HCT116 (cell line): ENCODE measurements at regions of chrX and their contacts with region 1.

Region 1: DNA sequence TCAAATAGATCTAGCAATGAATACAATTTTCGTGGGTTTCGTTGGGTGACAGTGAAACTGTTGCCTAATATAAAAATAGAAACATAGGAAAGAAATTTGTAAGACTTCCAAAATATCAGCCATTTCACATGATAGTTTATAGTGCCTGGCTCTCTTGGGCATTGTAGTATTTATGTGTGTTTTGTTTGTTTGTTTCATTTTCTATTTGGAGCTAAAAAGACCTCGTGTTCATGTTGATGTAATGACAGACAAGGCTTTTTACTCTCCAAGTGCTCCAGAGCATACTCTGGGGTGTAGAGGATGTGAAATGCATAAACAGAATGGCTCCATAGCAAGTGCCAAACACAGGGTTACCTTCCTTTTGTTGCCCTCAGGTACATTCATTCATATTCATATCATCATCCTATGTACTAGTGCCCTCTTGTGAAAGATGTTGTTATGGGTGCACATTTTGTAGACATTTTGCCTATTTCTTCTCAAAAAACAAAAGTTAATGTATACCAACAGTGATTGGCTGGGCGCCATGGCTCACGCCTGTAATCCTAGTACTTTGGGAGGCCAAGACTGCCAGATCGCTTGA is 100.7 kb upstream of the AMOT start:
- DNase-seq: no peak
- ATAC-seq: 0 out of 2 replicates have a peak, but pooled peaks have one; percentile 32
- H3K4me3 ChIP-seq: no peak overlapping the region
- H3K27ac ChIP-seq: no peak overlapping the region
- H3K4me1 ChIP-seq: no peaks in the 10 kb centered on the region
- H3K27me3 ChIP-seq: no peaks in the 10 kb centered on the region
- CTCF ChIP-seq: no peak
- POLR2A ChIP-seq: no peak
- RAD21 ChIP-seq: peak; percentile 34; the same call in 1 of the 2 replicates

Region 2: GRCh38 chrX:112759512-112759911 is 181.8 kb before region 1 on chrX:
- CTCF ChIA-PET with region 1: no interaction called
- POLR2A ChIA-PET with region 1: no interaction called
- RAD21 ChIA-PET with region 1: no interaction called
- intact Hi-C with region 1: loop called (anchors 10 kb)
- DNase-seq: no peak
- ATAC-seq: no peak
- H3K4me3 ChIP-seq: no peak overlapping the region
- H3K27ac ChIP-seq: no peak overlapping the region
- H3K4me1 ChIP-seq: no peaks in the 10 kb centered on the region
- H3K27me3 ChIP-seq: no peaks in the 10 kb centered on the region
- CTCF ChIP-seq: no peak
- POLR2A ChIP-seq: no peak
- RAD21 ChIP-seq: no peak